ENCODE measurements at regions of chr2 and their contacts with region 1.

Region 1: GRCh38 chr2:233700028-233700635 is 7.4 kb downstream of the UGT1A6 start:
- DNase-seq: peak; percentile 67 to 98
- H3K4me3 ChIP-seq: peak overlapping the region; percentile 69; the same call in 1 of the 2 replicates
- H3K27ac ChIP-seq: peak overlapping the region; percentile 97
- H3K4me1 ChIP-seq: peaks cover 92% of the 10 kb centered on the region
- H3K27me3 ChIP-seq: no peaks in the 10 kb centered on the region
- CTCF ChIP-seq: no peak

Region 2: GRCh38 chr2:233492773-233493172 is 207.4 kb before region 1 on chr2:
- CTCF ChIA-PET with region 1: interaction called, 4 read pairs
- POLR2A ChIA-PET with region 1: interaction called, 11 read pairs
- intact Hi-C with region 1: no loop called
- DNase-seq: no peak
- H3K4me3 ChIP-seq: no peak overlapping the region
- H3K27ac ChIP-seq: no peak overlapping the region
- H3K4me1 ChIP-seq: peaks cover 30% of the 10 kb centered on the region
- H3K27me3 ChIP-seq: no peaks in the 10 kb centered on the region
- CTCF ChIP-seq: no peak

Region 3: DNA sequence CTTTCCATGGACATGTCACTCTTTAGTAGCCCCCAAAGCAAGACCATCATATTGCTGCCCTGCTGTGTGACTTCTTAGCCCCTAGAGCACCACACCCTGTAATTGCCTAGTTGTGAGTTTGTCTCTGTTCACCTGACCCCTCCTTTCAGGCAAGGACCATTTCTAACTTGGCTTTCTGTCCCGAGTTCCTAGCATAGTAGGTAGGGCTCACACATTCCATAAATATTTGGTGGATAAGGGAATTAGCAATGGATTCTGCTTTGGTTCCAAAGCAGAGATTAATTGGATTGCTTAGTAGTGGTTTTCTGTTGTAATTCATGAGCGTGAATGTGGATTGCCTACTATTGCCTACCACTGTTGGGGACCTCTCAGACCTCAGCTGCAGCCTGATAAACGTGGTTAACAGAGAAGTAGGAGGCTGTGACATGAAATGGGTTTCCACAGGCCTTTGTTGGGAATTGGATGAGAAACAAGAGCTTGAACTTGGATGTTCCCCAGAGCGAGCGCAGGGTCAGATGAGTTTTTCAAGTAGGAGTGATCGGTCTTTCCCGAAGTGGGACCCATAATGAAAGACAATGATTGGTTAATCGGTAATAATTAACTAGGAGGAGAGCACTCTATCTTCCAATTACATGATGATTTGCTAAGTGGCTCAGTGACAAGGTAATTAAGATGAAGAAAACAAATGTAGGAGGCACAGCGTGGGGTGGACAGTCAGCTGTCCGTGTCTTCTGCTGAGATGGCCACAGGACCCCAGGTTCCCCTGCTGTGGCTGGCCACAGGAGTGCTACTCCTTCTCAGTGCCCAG is 46.5 kb after region 1 on chr2:
- CTCF ChIA-PET with region 1: no interaction called
- POLR2A ChIA-PET with region 1: interaction called, 11 read pairs
- intact Hi-C with region 1: no loop called
- DNase-seq: peak in 1 of 2 experiments; percentile 23
- H3K4me3 ChIP-seq: no peak overlapping the region
- H3K27ac ChIP-seq: no peak overlapping the region
- H3K4me1 ChIP-seq: no peaks in the 10 kb centered on the region
- H3K27me3 ChIP-seq: no peaks in the 10 kb centered on the region
- CTCF ChIP-seq: no peak

Measured in PC-9 (cell line).